ENCODE measurements at regions of chr10 and their contacts with region 1.

Region 1: GRCh38 chr10:94362360-94363250 is at the start of gene NOC3L:
- DNase-seq: peak; percentile 97 to 100
- ATAC-seq: peak; percentile 100
- H3K4me3 ChIP-seq: peak within 1 kb of the TSS; percentile 53 to 94
- H3K27ac ChIP-seq: peak within 1 kb of the TSS; percentile 5 to 43
- H3K4me1 ChIP-seq: no peaks in the 10 kb centered on the region
- H3K27me3 ChIP-seq: no peaks in the 10 kb centered on the region
- total RNA-seq, gene NOC3L: 17.0 to 17.6 TPM

Region 2: DNA sequence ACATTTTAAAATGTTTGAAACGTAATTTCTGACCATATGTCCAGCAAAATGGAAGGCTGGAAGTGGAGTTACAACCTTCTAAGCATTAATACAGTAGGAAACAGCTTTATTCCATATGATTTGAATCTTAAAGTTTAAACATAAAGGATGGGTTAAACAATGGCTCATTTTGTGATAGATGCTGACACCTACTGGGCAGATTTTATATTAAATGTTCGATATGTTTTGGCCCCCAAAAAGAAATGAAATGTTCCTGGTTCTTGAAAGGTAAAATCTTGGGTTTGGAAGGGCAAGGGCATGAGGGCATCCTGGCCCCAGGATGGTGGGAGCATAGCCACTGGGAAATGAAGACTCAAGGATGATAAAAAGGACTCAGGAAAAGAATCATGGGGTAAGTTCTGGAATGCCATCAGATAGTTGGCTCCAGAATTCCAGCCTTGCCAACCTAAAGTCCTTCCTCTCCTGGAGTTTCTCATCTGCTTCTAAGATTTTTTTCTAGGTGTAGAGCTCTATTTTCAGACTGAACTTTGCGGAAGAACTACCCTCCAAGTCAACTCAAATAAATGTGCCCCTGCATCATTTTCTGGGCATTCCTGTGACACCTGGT is 503.5 kb before region 1 on chr10:
- intact Hi-C with region 1: no loop called
- DNase-seq: no peak
- ATAC-seq: no peak
- H3K4me3 ChIP-seq: no peak overlapping the region
- H3K27ac ChIP-seq: no peak overlapping the region
- H3K4me1 ChIP-seq: no peaks in the 10 kb centered on the region
- H3K27me3 ChIP-seq: no peaks in the 10 kb centered on the region

Region 3: GRCh38 chr10:93916257-93917063 is 446.1 kb before region 1 on chr10:
- intact Hi-C with region 1: loop called in 1 of 2 experiments (anchors 2 kb)
- DNase-seq: no peak
- ATAC-seq: no peak
- H3K4me3 ChIP-seq: no peak overlapping the region
- H3K27ac ChIP-seq: no peak overlapping the region
- H3K4me1 ChIP-seq: no peaks in the 10 kb centered on the region
- H3K27me3 ChIP-seq: no peaks in the 10 kb centered on the region

Region 4: DNA sequence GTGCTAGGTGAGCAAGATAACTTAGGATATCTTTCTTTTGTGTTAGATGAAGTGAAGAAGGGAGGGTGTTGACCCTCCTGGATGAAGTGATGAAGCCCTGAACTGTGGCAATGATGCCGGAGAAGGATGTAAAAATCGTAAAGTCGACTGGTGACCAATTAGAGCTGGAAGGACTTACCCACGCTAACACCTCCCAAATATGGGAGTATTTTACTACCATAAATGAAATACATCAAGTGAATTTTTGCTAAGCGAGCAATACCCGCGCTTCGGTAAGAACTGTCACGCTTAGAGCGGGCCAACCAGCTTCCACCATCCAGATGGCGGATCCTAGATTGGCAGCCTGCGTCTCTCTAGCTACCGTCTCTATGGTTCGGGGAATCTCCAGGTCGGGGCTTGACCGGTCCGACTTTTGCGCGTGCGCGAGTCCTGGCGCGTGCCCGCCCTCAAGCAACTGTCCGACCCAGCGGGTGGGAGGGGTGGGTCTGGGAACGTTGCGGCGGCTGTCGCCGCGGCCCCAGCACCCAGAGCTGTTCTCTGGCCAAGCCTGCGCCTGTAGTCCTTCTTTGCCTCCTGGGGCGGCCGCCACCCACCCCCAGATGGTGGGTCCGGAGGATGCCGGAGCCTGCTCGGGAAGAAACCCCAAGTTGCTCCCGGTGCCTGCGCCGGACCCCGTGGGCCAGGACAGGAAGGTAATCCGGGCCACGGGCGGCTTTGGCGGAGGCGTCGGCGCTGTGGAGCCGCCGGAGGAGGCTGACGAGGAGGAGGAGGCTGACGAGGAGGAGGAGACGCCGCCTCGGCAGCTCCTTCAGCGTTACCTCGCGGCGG is 39.6 kb after region 1 on chr10 and contains the start of gene TBC1D12:
- intact Hi-C with region 1: loop called (anchors 1 to 2 kb)
- DNase-seq: peak; percentile 97 to 98
- ATAC-seq: peak; percentile 98
- H3K4me3 ChIP-seq: peak within 1 kb of the TSS; percentile 97
- H3K27ac ChIP-seq: peak within 1 kb of the TSS; percentile 82 to 98
- H3K4me1 ChIP-seq: peaks cover 0 to 2% of the 10 kb centered on the region in 2 donors
- H3K27me3 ChIP-seq: no peaks in the 10 kb centered on the region
- total RNA-seq, gene TBC1D12: 10.9 to 20.4 TPM

Region 5: DNA sequence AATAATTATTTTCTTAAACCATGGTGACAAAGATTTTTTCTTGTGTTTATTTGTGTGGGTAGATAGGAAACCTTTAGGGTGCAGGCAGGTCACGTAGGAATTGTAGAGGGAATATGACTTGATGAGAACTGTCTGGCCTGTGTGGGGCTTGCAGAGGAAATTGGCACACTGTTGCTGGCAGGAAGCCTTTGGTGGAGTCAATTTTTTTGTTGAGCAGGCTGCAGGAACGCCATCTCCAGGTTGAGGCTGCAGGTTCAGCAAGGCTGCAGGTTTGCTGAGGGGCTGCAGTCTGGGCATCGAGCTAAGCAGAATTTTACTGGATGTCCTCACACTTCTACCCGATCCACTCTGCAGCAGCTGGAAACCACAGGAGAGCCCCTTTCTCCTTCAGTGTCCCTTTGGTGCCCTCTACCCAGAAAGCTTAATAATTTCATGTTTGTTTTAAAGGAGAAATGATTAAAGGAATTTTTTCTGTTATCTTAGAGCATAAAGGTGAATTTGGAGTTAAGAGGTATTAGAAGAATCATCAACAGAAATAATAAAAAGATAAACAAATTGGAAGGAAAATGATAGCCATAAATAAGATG is 76.8 kb after region 1 on chr10:
- intact Hi-C with region 1: loop called (anchors 2 to 10 kb)
- DNase-seq: peak in 1 of 2 donors; percentile 52
- ATAC-seq: no peak
- H3K4me3 ChIP-seq: no peak overlapping the region
- H3K27ac ChIP-seq: no peak overlapping the region
- H3K4me1 ChIP-seq: peaks cover 0 to 3% of the 10 kb centered on the region in 2 donors
- H3K27me3 ChIP-seq: no peaks in the 10 kb centered on the region